ENCODE measurements at regions of chr4 and their contacts with region 1.

Region 1: DNA sequence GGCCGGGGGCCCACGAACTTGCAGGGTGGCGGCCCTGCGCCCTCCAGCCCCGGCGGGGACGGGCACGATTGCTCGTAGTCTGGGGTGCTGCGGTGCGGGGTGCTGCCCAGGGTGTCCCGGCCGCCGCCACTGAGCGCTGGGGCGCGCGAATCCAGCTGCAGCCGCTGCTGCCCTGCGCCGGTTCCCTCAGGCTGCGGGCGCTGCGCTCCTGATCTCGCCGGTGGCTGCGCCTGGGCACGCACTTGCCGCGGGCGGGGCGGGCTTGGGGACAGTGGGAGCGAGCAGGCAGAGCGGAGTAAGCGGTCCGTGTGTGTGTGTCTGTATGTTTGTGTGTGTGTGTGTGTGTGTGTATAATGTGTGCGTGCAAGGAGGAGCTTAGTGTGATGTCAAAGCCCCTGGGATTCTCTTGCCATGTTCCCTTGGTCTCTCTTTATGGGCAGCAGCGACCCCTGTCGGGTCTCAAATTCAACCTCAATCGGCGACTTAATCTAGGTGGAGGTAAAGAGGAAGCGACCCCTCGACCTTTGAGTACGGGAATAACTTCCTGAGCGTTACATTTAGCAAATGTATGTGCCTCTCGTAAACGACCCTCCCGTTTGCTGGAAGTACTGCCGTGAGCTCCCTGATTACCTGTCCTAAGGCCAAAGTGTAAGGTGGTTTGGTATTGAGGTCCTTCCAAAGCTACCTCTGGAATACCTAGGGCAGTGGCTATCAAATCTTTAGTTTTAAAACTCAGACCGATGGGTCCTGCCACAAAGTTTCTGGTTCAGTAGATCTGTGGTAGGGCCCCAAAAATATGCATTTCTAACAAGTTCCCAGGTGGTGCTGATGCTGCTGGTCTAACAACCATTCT is at the start of gene RNF150:
- DNase-seq: peak; percentile 79
- H3K4me3 ChIP-seq: peak within 1 kb of the TSS; percentile 63 to 73
- H3K27ac ChIP-seq: peak within 1 kb of the TSS; percentile 66 to 75
- H3K4me1 ChIP-seq: no peaks in the 10 kb centered on the region
- H3K27me3 ChIP-seq: no peaks in the 10 kb centered on the region
- CTCF ChIP-seq: peak in 3 of 4 experiments; percentile 60 to 86 (median 79)
- POLR2A ChIP-seq: no peak
- total RNA-seq, gene RNF150: 11.7 to 12.3 TPM

Region 2: GRCh38 chr4:140653718-140654494 is 479.5 kb before region 1 on chr4:
- intact Hi-C with region 1: loop called (anchors 10 kb)
- DNase-seq: no peak
- H3K4me3 ChIP-seq: no peak overlapping the region
- H3K27ac ChIP-seq: no peak overlapping the region
- H3K4me1 ChIP-seq: peaks cover 3% of the 10 kb centered on the region
- H3K27me3 ChIP-seq: no peaks in the 10 kb centered on the region
- CTCF ChIP-seq: no peak
- POLR2A ChIP-seq: no peak

Region 3: DNA sequence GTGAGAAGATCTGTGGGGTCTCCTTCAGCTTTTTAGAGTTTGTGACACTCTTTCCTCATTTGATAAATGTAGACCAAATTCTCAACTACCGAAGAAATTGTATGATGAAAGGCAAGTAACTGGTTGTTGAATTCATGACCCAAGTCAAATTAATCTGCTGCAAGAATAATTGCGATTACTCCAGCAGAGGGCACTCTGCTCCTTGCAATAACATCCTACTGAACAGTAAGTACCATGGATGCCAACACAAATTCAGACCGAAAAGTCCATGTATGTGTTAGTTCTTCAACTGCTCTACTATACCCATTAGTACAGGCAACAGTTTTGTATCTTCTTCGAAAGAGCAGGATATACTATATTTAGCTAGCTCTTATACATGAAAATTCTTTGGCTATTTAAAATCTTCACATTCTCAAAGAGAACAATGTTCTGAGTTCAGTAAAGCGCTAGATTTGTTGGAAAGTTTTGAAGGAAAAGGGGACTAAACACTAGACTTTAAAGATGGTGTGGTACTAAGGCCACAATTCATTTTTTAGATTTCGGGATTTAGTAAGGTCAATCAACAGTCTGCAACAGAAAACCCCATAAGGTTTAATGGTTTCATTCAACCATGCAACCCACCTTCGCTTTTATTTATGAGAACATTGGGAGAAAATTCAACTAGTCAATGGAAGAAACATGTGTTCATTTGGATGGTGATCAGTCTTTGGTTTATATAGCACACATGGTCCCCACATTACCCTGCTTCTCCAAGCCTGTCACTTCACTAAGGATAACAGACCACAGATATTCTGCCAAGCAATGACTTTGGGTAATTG is 271.8 kb before region 1 on chr4:
- intact Hi-C with region 1: loop called (anchors 1 kb)
- DNase-seq: peak; percentile 81
- H3K4me3 ChIP-seq: no peak overlapping the region
- H3K27ac ChIP-seq: no peak overlapping the region
- H3K4me1 ChIP-seq: no peaks in the 10 kb centered on the region
- H3K27me3 ChIP-seq: no peaks in the 10 kb centered on the region
- CTCF ChIP-seq: peak; percentile 44 to 88 (median 82)
- POLR2A ChIP-seq: no peak

Region 4: DNA sequence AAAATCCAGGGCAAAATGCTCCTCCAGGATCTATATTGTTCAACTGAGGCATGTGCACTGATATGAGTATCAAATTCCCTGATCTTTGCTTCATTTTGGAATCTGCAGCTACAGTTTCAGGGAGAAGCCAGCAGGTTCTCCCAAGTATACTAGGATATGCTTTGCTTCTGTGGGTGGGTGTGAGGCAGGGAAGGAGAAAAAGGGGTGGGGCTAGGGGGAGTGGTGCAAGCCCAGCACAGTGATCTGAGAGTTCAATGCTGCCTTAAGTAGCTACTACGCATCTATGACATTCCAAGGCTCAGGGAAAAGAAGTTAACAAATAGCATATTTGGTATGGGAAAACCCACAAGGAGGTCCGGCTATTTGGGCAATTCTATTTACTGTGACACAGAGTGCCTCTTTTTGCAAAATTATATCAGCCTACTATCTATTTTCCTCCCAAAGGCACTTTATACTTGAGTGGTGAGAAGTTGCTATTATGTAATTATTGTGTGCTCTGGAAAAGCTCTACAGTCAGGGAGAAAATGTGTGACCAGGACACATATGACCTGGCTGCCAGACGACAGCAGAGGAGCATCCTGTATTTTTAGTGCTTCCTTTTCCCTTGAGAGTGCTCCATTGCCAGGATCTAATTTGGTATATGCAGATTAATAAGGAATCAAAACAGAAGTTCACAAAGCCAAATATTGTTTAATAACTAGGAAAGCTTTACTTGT is 162.1 kb before region 1 on chr4:
- intact Hi-C with region 1: no loop called
- DNase-seq: no peak
- H3K4me3 ChIP-seq: no peak overlapping the region
- H3K27ac ChIP-seq: no peak overlapping the region
- H3K4me1 ChIP-seq: no peaks in the 10 kb centered on the region
- H3K27me3 ChIP-seq: no peaks in the 10 kb centered on the region
- CTCF ChIP-seq: no peak
- POLR2A ChIP-seq: no peak

Region 5: DNA sequence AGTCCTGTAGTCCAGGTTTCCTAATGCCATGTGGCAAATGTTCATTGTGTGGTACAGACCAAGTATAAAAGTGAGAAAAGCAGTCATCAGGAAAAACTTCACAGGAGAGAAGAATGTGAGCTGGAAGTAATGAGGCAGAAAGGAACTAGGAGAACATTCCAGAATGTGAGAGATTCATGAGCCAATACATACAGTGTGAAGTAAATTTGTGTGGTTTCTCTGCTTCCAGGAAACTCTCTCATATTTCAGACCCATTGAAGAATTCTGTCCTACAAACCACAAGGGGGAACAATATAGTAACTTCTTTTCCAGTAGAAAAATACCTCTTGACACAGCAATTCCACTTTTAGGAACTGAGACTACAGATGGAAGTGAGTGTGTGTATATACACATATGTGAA is 136.6 kb before region 1 on chr4:
- intact Hi-C with region 1: loop called (anchors 2 kb)
- DNase-seq: no peak
- H3K4me3 ChIP-seq: no peak overlapping the region
- H3K27ac ChIP-seq: no peak overlapping the region
- H3K4me1 ChIP-seq: no peaks in the 10 kb centered on the region
- H3K27me3 ChIP-seq: no peaks in the 10 kb centered on the region
- CTCF ChIP-seq: peak in 1 of 4 experiments; percentile 15
- POLR2A ChIP-seq: no peak

Region 6: GRCh38 chr4:141077611-141078225 is 55.7 kb before region 1 on chr4:
- intact Hi-C with region 1: loop called (anchors 5 kb)
- DNase-seq: no peak
- H3K4me3 ChIP-seq: no peak overlapping the region
- H3K27ac ChIP-seq: no peak overlapping the region
- H3K4me1 ChIP-seq: no peaks in the 10 kb centered on the region
- H3K27me3 ChIP-seq: no peaks in the 10 kb centered on the region
- CTCF ChIP-seq: no peak
- POLR2A ChIP-seq: no peak

Region 7: GRCh38 chr4:141220655-141221605 is 87.6 kb after region 1 on chr4 and contains the start of gene ZNF330:
- intact Hi-C with region 1: no loop called
- DNase-seq: peak; percentile 87
- H3K4me3 ChIP-seq: peak within 1 kb of the TSS; percentile 81 to 96
- H3K27ac ChIP-seq: peak within 1 kb of the TSS; percentile 93 to 97
- H3K4me1 ChIP-seq: no peaks in the 10 kb centered on the region
- H3K27me3 ChIP-seq: no peaks in the 10 kb centered on the region
- CTCF ChIP-seq: peak in 3 of 4 experiments; percentile 19 to 37 (median 29)
- POLR2A ChIP-seq: peak; percentile 82
- total RNA-seq, gene ZNF330: 12.1 to 22.7 TPM

Region 8: DNA sequence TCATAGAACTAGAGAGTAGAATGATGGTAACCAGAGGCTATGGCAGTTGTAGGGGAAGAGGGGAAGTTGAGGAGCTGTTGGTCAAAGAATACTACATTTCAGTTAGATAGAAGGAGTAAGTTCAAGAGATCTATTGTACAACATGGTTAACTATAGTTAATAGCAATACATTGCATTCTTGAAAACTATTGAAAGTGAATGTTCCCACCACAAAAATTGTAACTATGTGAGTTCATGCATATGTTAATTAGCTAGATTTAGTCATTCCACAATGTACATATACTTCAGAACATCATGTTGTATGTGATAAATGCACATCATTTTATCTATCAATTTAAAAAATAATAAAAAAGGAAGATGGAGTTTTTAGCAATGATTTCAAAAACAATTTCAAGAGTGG is 377.7 kb after region 1 on chr4:
- intact Hi-C with region 1: no loop called
- DNase-seq: no peak
- H3K4me3 ChIP-seq: no peak overlapping the region
- H3K27ac ChIP-seq: no peak overlapping the region
- H3K4me1 ChIP-seq: no peaks in the 10 kb centered on the region
- H3K27me3 ChIP-seq: no peaks in the 10 kb centered on the region
- CTCF ChIP-seq: no peak
- POLR2A ChIP-seq: no peak

Region 9: GRCh38 chr4:141614878-141615586 is 481.7 kb after region 1 on chr4:
- intact Hi-C with region 1: no loop called
- DNase-seq: no peak
- H3K4me3 ChIP-seq: no peak overlapping the region
- H3K27ac ChIP-seq: no peak overlapping the region
- H3K4me1 ChIP-seq: no peaks in the 10 kb centered on the region
- H3K27me3 ChIP-seq: no peaks in the 10 kb centered on the region
- CTCF ChIP-seq: no peak
- POLR2A ChIP-seq: no peak